ENCODE measurements at regions of chrX and their contacts with region 1.

Region 1: GRCh38 chrX:21972721-21973120 is 32.2 kb downstream of the SMS start:
- DNase-seq: peak; percentile 65
- H3K4me3 Mint-ChIP-seq: no peak overlapping the region
- H3K27ac Mint-ChIP-seq: peak overlapping the region; percentile 94
- H3K4me1 Mint-ChIP-seq: peaks cover 36% of the 10 kb centered on the region
- H3K27me3 Mint-ChIP-seq: no peaks in the 10 kb centered on the region

Region 2: DNA sequence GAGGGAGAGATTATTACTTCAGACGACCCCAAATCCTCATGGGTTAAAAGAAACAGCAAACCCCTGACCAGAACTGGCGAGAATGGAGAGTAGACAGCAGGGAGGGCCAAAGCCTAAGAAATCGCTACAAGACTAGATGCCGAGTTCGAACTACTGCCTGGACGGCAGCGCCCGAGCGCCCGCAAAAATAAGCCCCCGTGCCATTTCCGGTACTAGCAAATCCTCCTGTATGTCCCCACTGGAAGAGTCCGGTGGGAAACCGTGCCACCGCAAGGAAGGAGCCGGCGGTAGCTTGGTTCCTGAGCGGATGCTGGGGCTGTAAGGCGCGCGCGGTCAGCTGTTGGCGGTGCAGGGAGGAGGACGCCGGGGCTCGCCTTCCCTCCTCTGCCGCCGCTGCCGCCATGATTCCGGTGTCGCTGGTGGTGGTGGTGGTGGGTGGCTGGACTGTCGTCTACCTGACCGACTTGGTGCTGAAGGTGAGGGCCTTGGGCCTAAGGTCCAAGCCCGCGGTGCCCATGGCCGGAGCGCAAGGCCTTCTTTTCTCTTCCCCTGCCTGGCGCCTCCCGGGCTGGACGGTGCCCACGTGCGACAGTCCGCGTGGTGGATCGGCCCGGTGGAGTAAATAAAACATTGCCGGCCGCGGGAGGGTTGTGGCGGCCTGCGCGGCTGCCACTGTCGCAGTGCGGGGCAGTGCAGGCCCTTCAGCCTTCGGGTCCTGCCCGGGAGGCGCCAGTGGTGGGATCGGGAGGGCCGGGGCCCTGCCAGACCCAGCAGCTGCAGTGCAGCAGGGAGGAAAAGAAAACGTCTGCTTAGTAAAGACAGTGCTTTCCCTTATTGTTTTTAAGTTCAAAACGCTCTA is 133.2 kb before region 1 on chrX and contains the start of gene MBTPS2:
- CTCF ChIA-PET with region 1: interaction called, 25 read pairs
- POLR2A ChIA-PET with region 1: interaction called, 4 read pairs
- DNase-seq: peak; percentile 85
- H3K4me3 Mint-ChIP-seq: peak within 1 kb of the TSS; percentile 76
- H3K27ac Mint-ChIP-seq: peak within 1 kb of the TSS; percentile 84
- H3K4me1 Mint-ChIP-seq: peaks cover 11% of the 10 kb centered on the region
- H3K27me3 Mint-ChIP-seq: peaks cover 2% of the 10 kb centered on the region
- total RNA-seq, gene MBTPS2: 8.5 to 9.1 TPM

Region 3: DNA sequence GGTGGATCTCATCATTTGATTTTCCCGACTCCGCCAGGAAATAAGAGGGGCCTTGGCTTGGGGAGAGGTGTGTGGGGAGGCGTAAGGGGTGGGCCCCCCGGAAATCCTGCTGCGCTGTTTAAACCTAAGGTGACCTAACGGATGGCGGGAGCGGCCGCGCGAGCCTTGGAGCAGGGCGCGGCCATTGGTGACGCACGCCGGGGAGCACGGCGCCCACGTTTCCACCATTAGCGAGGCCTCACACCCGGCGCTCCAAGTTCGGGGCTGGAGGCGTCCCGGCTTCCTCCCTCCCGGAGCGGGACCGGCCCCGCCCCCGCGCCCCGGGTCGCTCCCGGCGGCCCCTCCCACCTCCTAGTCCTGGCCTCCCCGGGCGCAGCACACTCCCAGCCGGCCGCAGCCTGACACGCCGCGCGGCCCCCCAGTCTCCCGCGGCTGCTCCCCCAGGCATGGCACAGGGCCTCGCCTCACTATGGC is 32.3 kb before region 1 on chrX and contains the start of gene SMS:
- CTCF ChIA-PET with region 1: interaction called, 5 read pairs
- POLR2A ChIA-PET with region 1: interaction called, 11 read pairs
- DNase-seq: peak; percentile 59
- H3K4me3 Mint-ChIP-seq: peak within 1 kb of the TSS; percentile 74
- H3K27ac Mint-ChIP-seq: peak within 1 kb of the TSS; percentile 64
- H3K4me1 Mint-ChIP-seq: peaks cover 28% of the 10 kb centered on the region
- H3K27me3 Mint-ChIP-seq: no peaks in the 10 kb centered on the region
- total RNA-seq, gene SMS: 73.9 TPM

Region 4: GRCh38 chrX:21985332-21985777 is 12.6 kb after region 1 on chrX:
- CTCF ChIA-PET with region 1: interaction called, 52 read pairs
- POLR2A ChIA-PET with region 1: interaction called, 3 read pairs
- DNase-seq: peak; percentile 72
- H3K4me3 Mint-ChIP-seq: no peak overlapping the region
- H3K27ac Mint-ChIP-seq: no peak overlapping the region
- H3K4me1 Mint-ChIP-seq: peaks cover 11% of the 10 kb centered on the region
- H3K27me3 Mint-ChIP-seq: no peaks in the 10 kb centered on the region

Region 5: GRCh38 chrX:22012051-22012450 is 39.3 kb after region 1 on chrX:
- CTCF ChIA-PET with region 1: no interaction called
- POLR2A ChIA-PET with region 1: no interaction called
- DNase-seq: no peak
- H3K4me3 Mint-ChIP-seq: no peak overlapping the region
- H3K27ac Mint-ChIP-seq: no peak overlapping the region
- H3K4me1 Mint-ChIP-seq: no peaks in the 10 kb centered on the region
- H3K27me3 Mint-ChIP-seq: no peaks in the 10 kb centered on the region